Posterior vena cava (tissue), 2 donors: ENCODE measurements at regions of chr5 and their contacts with region 1.

Region 1: GRCh38 chr5:53425598-53426511 is 54.6 kb upstream of the FST start:
- DNase-seq: no peak

Region 2: GRCh38 chr5:53167836-53168235 is 258.0 kb before region 1 on chr5:
- intact Hi-C with region 1: loop called in 1 of 2 experiments (anchors 5 kb)
- DNase-seq: no peak

Region 3: DNA sequence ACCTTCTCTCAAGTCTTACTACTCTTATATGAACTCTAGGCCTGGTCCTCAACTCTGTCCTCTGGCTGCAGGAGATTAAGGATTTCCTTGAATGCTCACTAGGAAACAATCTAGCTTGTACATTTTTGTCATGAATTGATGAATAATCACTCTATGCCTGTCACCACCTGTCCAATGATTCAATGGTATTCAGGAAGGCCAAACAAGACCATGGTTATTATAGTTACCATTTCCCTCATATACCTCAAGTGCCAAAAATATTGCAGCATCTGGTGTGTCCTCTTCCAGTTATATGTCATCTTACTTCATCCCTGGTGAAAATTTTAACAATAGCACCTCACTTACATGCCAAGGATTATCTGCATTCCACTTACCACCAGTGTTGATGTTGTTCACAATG is 137.3 kb before region 1 on chr5:
- intact Hi-C with region 1: no loop called
- DNase-seq: no peak

Region 4: DNA sequence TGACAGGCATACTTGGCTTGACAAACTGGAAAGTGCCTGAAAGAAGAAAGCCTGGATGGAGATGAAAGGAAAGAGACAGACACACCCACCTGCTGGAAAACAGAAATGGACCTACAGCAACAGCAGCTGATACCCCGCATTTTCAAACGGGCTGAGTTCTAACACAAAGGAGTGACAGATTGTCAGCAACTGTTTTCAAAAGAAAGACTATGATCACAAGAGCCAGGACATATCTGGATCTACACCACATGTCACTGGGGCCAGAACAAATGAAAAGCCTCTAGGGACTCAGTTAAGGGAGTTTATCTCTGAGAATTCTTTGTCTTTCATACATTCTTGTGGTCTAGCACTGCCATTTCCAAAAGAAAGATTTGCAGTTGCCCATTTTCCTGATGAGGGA is 30.5 kb after region 1 on chr5:
- intact Hi-C with region 1: loop called in 1 of 2 experiments (anchors 1 kb)
- DNase-seq: no peak

Region 5: DNA sequence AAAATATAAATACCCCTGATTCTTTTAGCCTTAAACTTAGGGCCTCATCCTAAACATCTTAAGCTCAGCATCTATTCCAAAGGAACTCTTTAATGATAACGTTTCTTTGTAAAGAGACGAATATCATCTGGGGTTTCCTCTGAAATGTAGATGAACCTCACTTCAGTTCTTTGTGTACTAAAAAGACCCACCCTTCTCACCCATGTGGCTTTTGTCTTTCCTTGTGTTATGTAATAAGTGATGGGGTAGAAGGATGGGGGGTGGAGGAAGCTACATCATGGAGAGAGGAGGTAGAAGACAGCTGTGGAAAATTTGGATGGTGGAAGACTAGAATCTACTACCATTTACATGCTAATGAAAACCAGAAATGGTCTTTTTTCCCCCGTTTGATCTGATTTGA is 245.6 kb after region 1 on chr5:
- intact Hi-C with region 1: no loop called
- DNase-seq: no peak